ENCODE measurements at regions of chr15 and their contacts with region 1.

Region 1: GRCh38 chr15:85168642-85169173 is 187.1 kb downstream of the PDE8A start:
- DNase-seq: no peak
- ATAC-seq: no peak

Region 2: GRCh38 chr15:84961114-84961452 is 207.6 kb before region 1 on chr15:
- intact Hi-C with region 1: loop called (anchors 10 kb)
- DNase-seq: no peak
- ATAC-seq: no peak